PC-9 (cell line): ENCODE measurements at regions of chr2 and their contacts with region 1.

Region 1: GRCh38 chr2:240513549-240514287 is 44.1 kb downstream of the ANKMY1 start:
- DNase-seq: peak; percentile 71 to 87
- H3K4me3 ChIP-seq: no peak overlapping the region
- H3K27ac ChIP-seq: no peak overlapping the region
- H3K4me1 ChIP-seq: no peaks in the 10 kb centered on the region
- H3K27me3 ChIP-seq: no peaks in the 10 kb centered on the region
- CTCF ChIP-seq: peak; percentile 93

Region 2: DNA sequence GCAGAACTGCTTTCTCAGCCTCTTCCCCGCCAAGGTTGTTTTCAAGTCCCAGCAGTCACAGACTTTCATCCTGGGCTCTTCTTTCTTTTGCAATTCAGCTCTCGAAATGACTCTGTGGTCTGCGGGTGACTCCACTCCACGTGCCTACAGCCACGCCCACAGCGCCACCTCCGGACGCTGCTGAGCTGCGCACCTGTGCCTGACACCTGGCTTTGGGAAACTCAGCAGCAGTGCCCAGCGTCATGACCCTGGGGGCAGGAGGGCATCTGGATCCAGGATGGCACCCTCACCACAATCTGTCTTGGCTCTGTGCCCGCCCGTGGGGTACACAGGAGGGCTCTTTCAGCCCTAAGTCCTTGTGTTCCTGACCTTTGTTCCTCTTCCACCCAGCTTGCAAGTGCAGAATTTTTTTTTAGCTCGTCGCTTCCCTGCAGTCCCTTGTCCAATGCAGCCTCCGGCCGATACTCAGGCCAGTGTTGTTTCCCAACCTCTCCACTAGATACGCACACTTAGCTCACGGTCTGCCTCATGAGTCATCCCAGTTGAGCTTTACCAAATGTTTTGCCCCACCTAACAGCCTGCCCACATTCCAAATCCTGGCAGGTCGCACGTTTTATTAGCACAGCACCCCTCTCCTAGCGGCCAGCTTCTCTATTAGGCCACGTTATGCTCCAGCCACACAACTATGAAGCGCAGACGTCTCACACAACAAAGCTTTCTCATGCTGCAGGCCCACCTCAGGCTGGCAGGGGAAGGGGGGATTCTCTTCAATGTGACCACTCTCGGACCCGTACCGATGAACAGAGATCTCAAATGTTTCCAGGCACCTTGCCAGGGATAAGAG is 66.3 kb after region 1 on chr2:
- CTCF ChIA-PET with region 1: interaction called, 16 read pairs
- POLR2A ChIA-PET with region 1: no interaction called
- intact Hi-C with region 1: no loop called
- DNase-seq: peak; percentile 97 to 99
- H3K4me3 ChIP-seq: peak overlapping the region; percentile 46; the same call in 1 of the 2 replicates
- H3K27ac ChIP-seq: peak overlapping the region; percentile 98
- H3K4me1 ChIP-seq: peaks cover 60% of the 10 kb centered on the region
- H3K27me3 ChIP-seq: no peaks in the 10 kb centered on the region
- CTCF ChIP-seq: peak; percentile 97

Region 3: DNA sequence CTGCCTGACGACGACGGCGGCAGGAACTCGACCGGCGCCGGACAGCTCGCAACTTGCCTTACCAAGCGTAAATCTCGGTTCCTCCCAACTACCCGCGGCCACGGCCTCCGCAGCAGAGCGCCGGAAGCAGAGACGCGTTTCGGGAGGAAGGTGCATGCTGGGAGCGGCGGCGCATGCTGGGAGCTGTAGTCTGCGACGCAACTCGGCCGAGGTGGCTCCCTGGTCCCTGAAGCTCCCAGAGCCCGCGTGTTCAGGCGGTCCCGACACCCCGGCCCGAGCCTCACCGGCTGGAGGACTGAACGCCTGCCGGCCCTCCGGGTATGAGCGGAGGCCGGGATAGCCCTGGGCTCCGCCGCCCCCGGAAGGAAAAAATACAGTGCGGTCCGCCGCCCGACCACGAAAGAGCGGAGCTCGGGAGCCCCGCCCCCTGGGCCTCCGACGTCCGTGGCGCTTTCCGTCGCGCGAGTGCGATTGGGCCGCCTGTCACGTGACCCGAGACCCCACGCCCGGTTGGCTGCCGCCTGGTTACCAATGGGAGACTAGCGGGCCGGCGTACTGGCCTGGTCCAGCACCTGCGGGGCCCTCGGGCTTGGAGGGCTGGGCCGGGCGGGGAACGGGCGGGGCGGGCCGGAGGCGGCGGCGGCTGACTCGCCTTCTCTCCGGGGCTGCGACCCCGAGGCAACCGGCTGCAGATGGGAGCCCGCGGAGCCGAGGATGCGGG is 72.6 kb after region 1 on chr2 and contains the start of gene CAPN10:
- CTCF ChIA-PET with region 1: interaction called, 12 read pairs
- POLR2A ChIA-PET with region 1: interaction called, 6 read pairs
- intact Hi-C with region 1: no loop called
- DNase-seq: peak; percentile 93 to 100
- H3K4me3 ChIP-seq: peak within 1 kb of the TSS; percentile 83
- H3K27ac ChIP-seq: peak within 1 kb of the TSS; percentile 61
- H3K4me1 ChIP-seq: peaks cover 40% of the 10 kb centered on the region
- H3K27me3 ChIP-seq: no peaks in the 10 kb centered on the region
- CTCF ChIP-seq: no peak
- total RNA-seq, gene CAPN10: 49.8 and 70.3 TPM in 2 replicates

Region 4: DNA sequence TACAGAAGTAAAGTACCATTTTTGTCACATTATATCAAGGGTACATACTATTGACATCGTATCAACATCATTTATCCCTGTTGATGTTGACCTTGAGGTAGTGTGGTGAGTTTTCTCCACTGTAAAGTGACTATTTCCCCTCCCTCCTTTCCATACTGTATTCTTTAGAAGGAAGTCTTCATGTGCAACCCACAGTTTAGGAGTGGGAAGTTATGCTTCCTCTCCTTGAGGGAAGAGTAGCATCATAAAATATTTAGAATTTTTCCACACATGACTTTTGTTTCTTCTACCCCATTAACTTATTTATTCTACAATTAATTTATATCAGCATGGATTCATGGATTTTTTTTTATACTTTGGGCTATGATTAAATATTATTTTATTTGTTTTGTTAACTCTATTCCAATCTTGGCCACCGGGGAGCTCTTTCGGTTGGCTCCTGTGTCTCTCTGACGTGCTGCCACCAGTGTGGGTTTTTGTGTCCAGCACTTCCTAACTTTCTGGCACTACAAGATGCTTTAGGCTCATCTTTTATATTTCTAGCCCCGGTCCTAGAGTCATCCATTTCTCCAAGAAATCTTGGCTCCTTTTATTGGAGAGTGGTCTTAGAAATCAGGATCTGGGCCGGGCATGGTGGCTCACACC is 149.9 kb after region 1 on chr2:
- CTCF ChIA-PET with region 1: interaction called, 10 read pairs
- POLR2A ChIA-PET with region 1: no interaction called
- intact Hi-C with region 1: no loop called
- DNase-seq: no peak
- H3K4me3 ChIP-seq: no peak overlapping the region
- H3K27ac ChIP-seq: no peak overlapping the region
- H3K4me1 ChIP-seq: no peaks in the 10 kb centered on the region
- H3K27me3 ChIP-seq: peaks cover 94% of the 10 kb centered on the region
- CTCF ChIP-seq: no peak

Region 5: GRCh38 chr2:240704651-240705050 is 190.9 kb after region 1 on chr2:
- CTCF ChIA-PET with region 1: no interaction called
- POLR2A ChIA-PET with region 1: no interaction called
- intact Hi-C with region 1: loop called (anchors 10 kb)
- DNase-seq: no peak
- H3K4me3 ChIP-seq: no peak overlapping the region
- H3K27ac ChIP-seq: no peak overlapping the region
- H3K4me1 ChIP-seq: no peaks in the 10 kb centered on the region
- H3K27me3 ChIP-seq: peaks cover 88% of the 10 kb centered on the region
- CTCF ChIP-seq: no peak

Region 6: DNA sequence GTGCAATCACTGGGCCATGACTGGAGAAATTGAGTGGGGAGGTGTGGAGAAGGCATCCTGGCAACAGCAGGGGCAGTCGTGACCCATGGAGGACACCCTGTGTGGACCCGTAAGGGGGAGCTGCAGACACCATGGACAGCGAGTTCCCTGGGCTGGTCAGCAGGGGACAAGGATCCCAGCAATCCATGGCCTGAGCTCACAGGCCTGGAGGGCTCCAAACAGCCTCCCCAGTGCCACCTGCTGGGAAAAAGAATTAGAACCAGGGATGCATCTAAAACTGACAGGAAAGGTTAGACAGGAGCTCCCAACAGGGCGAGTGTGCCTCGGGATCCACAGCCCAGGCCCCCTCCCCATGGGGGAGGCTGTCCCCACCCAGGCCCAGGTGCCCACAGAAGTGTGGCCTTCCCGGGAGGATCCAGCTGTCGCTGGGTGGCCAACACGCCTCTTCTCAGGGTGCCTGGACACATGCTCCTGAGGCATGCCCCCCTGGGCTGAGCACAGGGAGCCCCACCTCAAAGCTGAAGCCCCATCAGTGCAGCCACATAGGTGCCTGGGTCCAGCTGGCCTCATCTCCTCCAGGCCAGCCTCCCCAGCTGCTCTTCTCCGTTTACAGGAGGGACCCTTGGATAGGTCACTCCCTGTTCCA is 326.8 kb after region 1 on chr2:
- CTCF ChIA-PET with region 1: interaction called, 24 read pairs
- POLR2A ChIA-PET with region 1: no interaction called
- intact Hi-C with region 1: no loop called
- DNase-seq: peak; percentile 71 to 88
- H3K4me3 ChIP-seq: no peak overlapping the region
- H3K27ac ChIP-seq: no peak overlapping the region
- H3K4me1 ChIP-seq: no peaks in the 10 kb centered on the region
- H3K27me3 ChIP-seq: peaks cover 87% of the 10 kb centered on the region
- CTCF ChIP-seq: peak; percentile 80